Keratinocyte (primary cell): ENCODE measurements at regions of chr2 and their contacts with region 1.

Region 1: GRCh38 chr2:38554973-38555595 is 47.6 kb downstream of the HNRNPLL start:
- DNase-seq: no peak
- H3K4me3 ChIP-seq: no peak overlapping the region
- H3K27ac ChIP-seq: no peak overlapping the region
- H3K4me1 ChIP-seq: no peaks in the 10 kb centered on the region
- H3K27me3 ChIP-seq: no peaks in the 10 kb centered on the region
- CTCF ChIP-seq: peak; percentile 6 to 29 (median 26)

Region 2: GRCh38 chr2:38740851-38741731 is 186.0 kb after region 1 on chr2:
- dilution Hi-C with region 1: loop called (anchors 25 kb)
- DNase-seq: no peak
- H3K4me3 ChIP-seq: no peak overlapping the region
- H3K27ac ChIP-seq: no peak overlapping the region
- H3K4me1 ChIP-seq: no peaks in the 10 kb centered on the region
- H3K27me3 ChIP-seq: no peaks in the 10 kb centered on the region
- CTCF ChIP-seq: peak in 1 of 3 experiments; percentile 31